Pancreas (tissue), 10 donors: ENCODE measurements at regions of chr3 and their contacts with region 1.

Region 1: DNA sequence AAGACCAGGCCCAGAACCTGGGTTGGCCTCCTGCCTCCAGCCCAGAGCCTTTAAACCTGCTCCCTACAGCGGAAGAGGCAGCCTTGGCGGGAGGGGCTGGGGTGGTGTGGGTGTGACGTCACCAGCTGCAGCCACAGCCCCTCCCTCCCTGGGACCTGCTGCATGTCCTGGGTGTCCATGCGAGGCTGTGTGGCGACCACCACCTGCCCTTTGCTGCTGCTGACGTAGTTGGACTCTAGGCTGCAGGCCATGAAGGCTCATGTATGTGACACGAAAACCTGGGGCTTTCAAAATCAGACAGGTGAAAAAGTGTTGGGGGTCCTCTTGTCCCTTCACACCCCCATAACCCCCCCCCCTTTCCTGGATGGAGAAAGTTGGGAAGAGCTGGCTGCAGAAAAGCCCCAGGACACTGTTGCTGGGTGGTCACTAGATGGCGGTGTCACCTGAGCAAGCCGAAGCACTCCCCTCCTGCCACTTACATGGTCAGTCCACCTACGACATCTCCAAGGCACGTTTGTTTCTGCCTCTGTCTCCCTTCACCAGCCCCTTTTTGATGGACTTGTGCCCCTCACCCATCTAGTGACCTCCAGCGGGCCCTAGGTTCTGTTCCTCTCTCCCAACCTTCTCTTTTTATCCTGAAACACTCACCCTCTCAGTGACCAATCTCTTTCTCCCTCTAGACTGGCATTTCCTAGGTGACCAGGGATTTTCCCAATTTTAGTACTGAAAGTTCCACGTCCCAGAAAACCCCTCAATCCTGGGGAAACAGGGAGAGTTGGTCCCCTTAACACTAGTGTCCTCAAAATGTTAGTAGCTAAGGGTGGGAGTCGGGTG is 35.2 kb downstream of the SLC6A20 start:
- DNase-seq: peak in 4 of 6 donors; percentile 41 to 66 (median 46)
- ATAC-seq: peak; percentile 85 to 97 (median 94)
- H3K4me3 ChIP-seq: no peak overlapping the region
- H3K27ac ChIP-seq: no peak overlapping the region
- H3K4me1 ChIP-seq: no peaks in the 10 kb centered on the region
- H3K27me3 ChIP-seq: no peaks in the 10 kb centered on the region
- CTCF ChIP-seq: peak; percentile 53 to 67 (median 64)

Region 2: GRCh38 chr3:45666757-45667431 is 94.2 kb before region 1 on chr3:
- intact Hi-C with region 1: no loop called
- DNase-seq: peak in 3 of 6 donors; percentile 43 to 75 (median 66)
- ATAC-seq: no peak
- H3K4me3 ChIP-seq: no peak overlapping the region
- H3K27ac ChIP-seq: no peak overlapping the region
- H3K4me1 ChIP-seq: peaks cover 0 to 5% (median 3%) of the 10 kb centered on the region in 3 donors
- H3K27me3 ChIP-seq: no peaks in the 10 kb centered on the region
- CTCF ChIP-seq: no peak

Region 3: DNA sequence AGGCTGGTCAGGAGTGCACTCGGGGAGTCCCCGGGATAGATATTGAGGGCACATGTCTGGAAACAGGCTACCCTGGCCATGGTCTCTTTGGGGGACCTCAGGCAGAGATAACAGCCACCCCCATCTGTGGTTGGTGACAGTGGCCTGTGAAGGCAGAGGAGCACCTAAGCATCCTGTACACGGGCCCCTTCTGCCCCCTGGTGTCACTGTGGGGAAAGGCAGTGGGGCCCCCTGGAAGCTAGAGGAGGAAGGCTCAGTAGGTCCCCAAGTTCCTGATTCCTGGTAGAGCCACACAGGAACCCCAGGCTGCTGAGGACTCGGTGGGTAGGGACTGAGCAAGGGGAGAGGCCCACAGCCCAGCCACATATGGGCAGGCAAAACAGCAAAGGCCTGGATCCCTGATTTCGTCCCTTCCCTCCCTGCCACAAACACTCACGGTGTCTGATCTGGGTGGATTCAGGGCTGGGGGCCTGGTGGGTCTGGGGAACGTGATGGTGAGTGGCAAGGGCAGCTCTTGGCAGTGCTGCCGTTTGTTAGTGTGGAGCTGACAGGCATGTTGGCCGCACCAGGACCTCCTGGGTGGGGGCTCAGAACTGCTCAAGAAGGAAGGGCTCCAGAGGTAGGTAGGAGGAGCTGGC is 168.1 kb after region 1 on chr3:
- intact Hi-C with region 1: loop called in 1 of 3 experiments (anchors 10 kb)
- DNase-seq: peak in 1 of 6 donors; percentile 19
- ATAC-seq: peak in 3 of 4 donors; percentile 55 to 74 (median 66)
- H3K4me3 ChIP-seq: no peak overlapping the region
- H3K27ac ChIP-seq: no peak overlapping the region
- H3K4me1 ChIP-seq: no peaks in the 10 kb centered on the region
- H3K27me3 ChIP-seq: no peaks in the 10 kb centered on the region
- CTCF ChIP-seq: peak in 3 of 4 donors; percentile 27 to 31 (median 31)